ENCODE measurements at regions of chr4 and their contacts with region 1.

Region 1: GRCh38 chr4:123599920-123600810 is 203.6 kb downstream of the SPRY1 start:
- DNase-seq: peak; percentile 82
- H3K4me3 ChIP-seq: no peak overlapping the region
- H3K27ac ChIP-seq: peak overlapping the region; percentile 65 to 79 (median 74)
- H3K4me1 ChIP-seq: peaks cover 18 to 58% (median 42%) of the 10 kb centered on the region in 4 donors
- H3K27me3 ChIP-seq: no peaks in the 10 kb centered on the region
- CTCF ChIP-seq: no peak
- EP300 ChIP-seq: no peak
- POLR2A ChIP-seq: no peak

Region 2: DNA sequence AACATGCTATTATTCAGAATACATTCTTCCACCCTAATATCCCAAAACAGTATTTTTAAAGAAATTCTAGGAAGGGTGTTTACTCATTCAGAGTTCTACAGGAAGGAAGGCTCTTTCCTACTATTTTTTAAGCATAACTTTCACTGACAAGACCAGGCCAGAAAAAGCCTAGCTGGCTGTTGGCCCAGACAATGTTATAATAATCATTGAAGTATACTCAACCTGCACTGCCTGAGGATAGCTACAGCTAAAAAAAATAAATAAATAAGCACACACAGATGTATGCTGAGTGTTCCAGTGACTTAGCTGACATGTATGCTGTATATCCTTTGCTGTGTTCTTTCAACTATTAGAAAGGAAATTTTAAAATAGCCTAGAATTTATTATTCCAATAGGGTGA is 349.3 kb before region 1 on chr4:
- in situ Hi-C with region 1: no loop called
- intact Hi-C with region 1: no loop called
- DNase-seq: no peak
- H3K4me3 ChIP-seq: no peak overlapping the region
- H3K27ac ChIP-seq: no peak overlapping the region
- H3K4me1 ChIP-seq: peaks cover 0 to 16% (median 7%) of the 10 kb centered on the region in 4 donors
- H3K27me3 ChIP-seq: no peaks in the 10 kb centered on the region
- CTCF ChIP-seq: no peak
- EP300 ChIP-seq: no peak
- POLR2A ChIP-seq: no peak

Region 3: DNA sequence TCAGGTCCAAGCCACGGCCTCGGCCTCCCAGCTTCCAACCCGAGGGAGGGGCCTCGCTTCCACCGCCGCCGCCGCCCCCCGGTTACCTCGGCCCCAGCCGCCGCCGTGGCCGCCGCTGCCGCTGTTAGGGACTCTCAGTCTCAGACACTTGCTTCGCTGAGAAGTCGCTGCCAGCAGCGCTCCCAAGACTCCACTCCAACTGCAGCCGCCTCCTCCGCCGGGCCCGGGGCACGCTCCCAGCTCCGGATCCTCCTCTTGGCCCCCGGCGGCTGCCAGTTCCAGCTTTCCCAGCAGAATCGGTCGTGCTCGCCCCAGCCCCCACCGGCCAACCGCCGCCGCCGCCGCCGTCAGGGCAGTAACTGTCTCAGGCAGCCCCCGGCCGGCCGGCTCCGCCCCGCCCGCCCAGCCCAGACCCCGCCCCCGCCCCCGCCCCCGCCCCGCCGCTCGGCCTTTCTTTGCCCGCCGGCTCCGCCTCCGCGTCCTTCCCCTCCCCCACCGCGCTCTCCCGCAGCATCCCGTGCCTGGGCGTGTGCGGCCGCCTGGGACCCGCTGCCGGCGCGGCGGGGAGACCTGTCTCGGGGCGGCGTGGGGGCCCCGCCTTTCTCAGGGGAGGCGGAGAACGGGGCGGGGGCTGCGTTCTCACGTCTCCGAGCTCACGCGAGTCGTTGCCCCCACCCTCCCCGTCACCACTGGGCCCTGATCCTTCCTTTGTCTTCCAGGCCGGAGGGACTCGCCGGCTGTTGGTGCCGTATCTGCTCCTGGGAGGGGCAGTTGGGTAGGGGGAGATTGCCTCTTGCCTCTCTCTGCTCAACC is 1112.4 kb after region 1 on chr4 and contains the start of gene ANKRD50:
- in situ Hi-C with region 1: loop called in 1 of 4 experiments (anchors 25 kb)
- intact Hi-C with region 1: no loop called
- DNase-seq: peak; percentile 86
- H3K4me3 ChIP-seq: peak within 1 kb of the TSS; percentile 76 to 83 (median 76)
- H3K27ac ChIP-seq: peak within 1 kb of the TSS; percentile 91 to 97 (median 95)
- H3K4me1 ChIP-seq: peaks cover 5 to 33% (median 18%) of the 10 kb centered on the region in 4 donors
- H3K27me3 ChIP-seq: no peaks in the 10 kb centered on the region
- CTCF ChIP-seq: no peak
- EP300 ChIP-seq: no peak
- POLR2A ChIP-seq: peak; percentile 64
- total RNA-seq, gene ANKRD50: 11.9 to 31.8 (median 13.9) TPM